ENCODE measurements at regions of chr5 and their contacts with region 1.

Region 1: GRCh38 chr5:1641560-1642166 is 117.9 kb upstream of the LPCAT1 start:
- DNase-seq: peak; percentile 21
- ATAC-seq: peak; percentile 90
- H3K4me3 ChIP-seq: no peak overlapping the region
- H3K27ac ChIP-seq: no peak overlapping the region
- H3K4me1 ChIP-seq: no peaks in the 10 kb centered on the region
- H3K27me3 ChIP-seq: peaks cover 2 to 9% of the 10 kb centered on the region in 2 experiments; a peak in 2 of 4 replicates
- CTCF ChIP-seq: peak; percentile 90 to 99 (median 98); a peak in 5 of 6 replicates
- EP300 ChIP-seq: no peak
- POLR2A ChIP-seq: no peak
- RAD21 ChIP-seq: peak; percentile 91

Region 2: GRCh38 chr5:923281-923873 is 718.3 kb before region 1 on chr5:
- CTCF ChIA-PET with region 1: interaction called, 7 read pairs
- POLR2A ChIA-PET with region 1: no interaction called
- RAD21 ChIA-PET with region 1: no interaction called
- SMC1A ChIA-PET with region 1: interaction called, 4 read pairs
- in situ Hi-C with region 1: loop called (anchors 10 kb)
- intact Hi-C with region 1: loop called (anchors 2 kb)
- DNase-seq: no peak
- ATAC-seq: peak; percentile 100
- H3K4me3 ChIP-seq: no peak overlapping the region
- H3K27ac ChIP-seq: no peak overlapping the region
- H3K4me1 ChIP-seq: no peaks in the 10 kb centered on the region
- H3K27me3 ChIP-seq: no peaks in the 10 kb centered on the region
- CTCF ChIP-seq: peak; percentile 81 to 97 (median 92); a peak in 5 of 6 replicates
- EP300 ChIP-seq: no peak
- POLR2A ChIP-seq: no peak
- RAD21 ChIP-seq: peak; percentile 93

Region 3: GRCh38 chr5:1208743-1209506 is 432.7 kb before region 1 on chr5:
- CTCF ChIA-PET with region 1: interaction called, 11 read pairs
- POLR2A ChIA-PET with region 1: no interaction called
- RAD21 ChIA-PET with region 1: interaction called, 9 read pairs
- SMC1A ChIA-PET with region 1: interaction called, 3 read pairs
- in situ Hi-C with region 1: no loop called
- intact Hi-C with region 1: no loop called
- DNase-seq: no peak
- ATAC-seq: peak; percentile 79
- H3K4me3 ChIP-seq: no peak overlapping the region
- H3K27ac ChIP-seq: no peak overlapping the region
- H3K4me1 ChIP-seq: no peaks in the 10 kb centered on the region
- H3K27me3 ChIP-seq: no peaks in the 10 kb centered on the region
- CTCF ChIP-seq: peak; percentile 13 to 50 (median 45); a peak in 3 of 6 replicates
- EP300 ChIP-seq: no peak
- POLR2A ChIP-seq: no peak
- RAD21 ChIP-seq: peak; percentile 55

Region 4: DNA sequence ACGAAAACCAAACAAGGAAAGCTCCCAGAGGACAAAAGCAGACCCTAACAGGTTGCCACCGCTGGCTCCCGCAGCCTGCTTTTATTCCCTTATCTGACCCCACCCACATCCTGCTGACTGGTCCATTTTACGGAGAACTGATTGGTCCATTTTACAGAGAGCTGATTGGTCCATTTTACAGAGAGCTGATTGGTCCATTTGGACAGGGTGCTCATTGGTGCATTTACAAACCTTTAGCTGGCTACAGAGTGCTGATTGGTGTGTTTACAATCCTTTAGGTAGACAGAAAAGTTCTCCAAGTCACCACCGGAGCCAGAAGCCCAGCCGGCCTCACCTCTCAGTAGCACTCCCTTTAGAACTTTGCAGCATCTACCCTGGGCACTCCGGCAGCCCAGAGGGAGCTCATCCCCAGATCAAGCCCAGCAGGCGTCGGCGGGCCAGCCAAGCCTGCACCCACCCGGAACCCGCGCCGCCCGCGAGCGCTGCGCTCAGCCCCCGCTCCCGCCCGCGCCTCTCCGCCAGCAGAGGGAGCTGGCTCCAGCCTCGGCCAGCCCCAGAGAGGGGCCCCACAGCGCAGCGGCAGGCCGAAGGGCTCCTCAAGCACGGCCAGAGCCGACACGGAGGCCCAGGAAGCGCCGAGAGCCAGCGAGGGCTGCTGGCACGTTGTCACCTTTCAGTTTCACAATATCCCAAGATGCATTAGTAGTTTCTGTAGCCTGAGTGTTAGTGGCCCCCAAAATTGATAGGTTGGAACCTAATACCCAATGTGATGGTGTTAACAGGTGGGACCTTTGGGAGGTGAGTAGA is 261.4 kb before region 1 on chr5:
- CTCF ChIA-PET with region 1: interaction called, 6 read pairs
- POLR2A ChIA-PET with region 1: no interaction called
- RAD21 ChIA-PET with region 1: no interaction called
- SMC1A ChIA-PET with region 1: interaction called, 3 read pairs
- in situ Hi-C with region 1: no loop called
- intact Hi-C with region 1: loop called (anchors 1 kb)
- DNase-seq: no peak
- ATAC-seq: peak; percentile 96
- H3K4me3 ChIP-seq: no peak overlapping the region
- H3K27ac ChIP-seq: no peak overlapping the region
- H3K4me1 ChIP-seq: no peaks in the 10 kb centered on the region
- H3K27me3 ChIP-seq: peaks cover 1 to 2% of the 10 kb centered on the region in 2 experiments; a peak in 2 of 4 replicates
- CTCF ChIP-seq: peak; percentile 43 to 64 (median 63); a peak in 5 of 6 replicates
- EP300 ChIP-seq: no peak
- POLR2A ChIP-seq: no peak
- RAD21 ChIP-seq: peak; percentile 57

Region 5: DNA sequence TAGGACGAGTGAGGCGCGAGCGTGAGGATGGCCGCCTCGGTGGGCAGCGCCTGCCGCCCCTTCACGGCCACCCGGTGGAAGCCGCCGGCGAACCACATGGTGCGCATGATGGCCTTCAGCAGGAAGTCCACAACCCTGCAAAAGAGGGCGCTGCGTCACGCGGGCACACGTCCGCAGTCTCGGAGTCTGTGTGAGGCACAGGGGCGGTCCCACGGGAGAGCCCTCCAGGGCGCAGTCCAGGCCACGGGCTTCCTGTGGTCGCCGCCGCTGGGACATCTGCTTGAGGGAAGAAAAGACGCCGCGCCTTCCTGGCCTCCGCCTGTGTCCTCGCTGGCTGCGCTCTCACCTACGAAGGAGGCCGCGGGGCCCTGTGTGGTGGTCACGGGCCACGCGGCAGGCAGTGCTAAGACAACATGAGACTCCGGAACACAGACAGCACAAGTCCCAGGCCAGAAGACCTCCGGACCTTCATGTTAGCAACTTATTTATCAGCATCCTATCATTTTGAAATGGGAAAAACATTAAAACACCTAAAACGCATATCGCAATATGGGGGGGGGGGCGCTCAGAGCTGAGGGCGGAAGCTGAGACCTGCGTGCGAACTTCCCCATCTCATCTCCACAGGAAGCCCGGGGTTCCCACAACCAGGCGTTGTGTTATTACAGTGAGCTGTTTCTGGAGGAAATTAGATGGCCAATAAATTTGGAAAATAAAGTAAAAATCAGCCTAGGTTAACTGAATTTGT is 146.7 kb before region 1 on chr5:
- CTCF ChIA-PET with region 1: interaction called, 5 read pairs
- POLR2A ChIA-PET with region 1: no interaction called
- RAD21 ChIA-PET with region 1: interaction called, 4 read pairs
- SMC1A ChIA-PET with region 1: no interaction called
- in situ Hi-C with region 1: no loop called
- intact Hi-C with region 1: loop called (anchors 5 kb)
- DNase-seq: peak; percentile 74
- ATAC-seq: peak; percentile 53
- H3K4me3 ChIP-seq: peak overlapping the region; percentile 59; the same call in 1 of the 2 replicates
- H3K27ac ChIP-seq: peak overlapping the region; percentile 87
- H3K4me1 ChIP-seq: peaks cover 87% of the 10 kb centered on the region
- H3K27me3 ChIP-seq: no peaks in the 10 kb centered on the region
- CTCF ChIP-seq: peak; percentile 14 to 67 (median 24); a peak in 3 of 6 replicates
- EP300 ChIP-seq: peak; percentile 71 to 84
- POLR2A ChIP-seq: no peak
- RAD21 ChIP-seq: 0 out of 2 replicates have a peak, but pooled peaks have one; percentile 25

Region 6: DNA sequence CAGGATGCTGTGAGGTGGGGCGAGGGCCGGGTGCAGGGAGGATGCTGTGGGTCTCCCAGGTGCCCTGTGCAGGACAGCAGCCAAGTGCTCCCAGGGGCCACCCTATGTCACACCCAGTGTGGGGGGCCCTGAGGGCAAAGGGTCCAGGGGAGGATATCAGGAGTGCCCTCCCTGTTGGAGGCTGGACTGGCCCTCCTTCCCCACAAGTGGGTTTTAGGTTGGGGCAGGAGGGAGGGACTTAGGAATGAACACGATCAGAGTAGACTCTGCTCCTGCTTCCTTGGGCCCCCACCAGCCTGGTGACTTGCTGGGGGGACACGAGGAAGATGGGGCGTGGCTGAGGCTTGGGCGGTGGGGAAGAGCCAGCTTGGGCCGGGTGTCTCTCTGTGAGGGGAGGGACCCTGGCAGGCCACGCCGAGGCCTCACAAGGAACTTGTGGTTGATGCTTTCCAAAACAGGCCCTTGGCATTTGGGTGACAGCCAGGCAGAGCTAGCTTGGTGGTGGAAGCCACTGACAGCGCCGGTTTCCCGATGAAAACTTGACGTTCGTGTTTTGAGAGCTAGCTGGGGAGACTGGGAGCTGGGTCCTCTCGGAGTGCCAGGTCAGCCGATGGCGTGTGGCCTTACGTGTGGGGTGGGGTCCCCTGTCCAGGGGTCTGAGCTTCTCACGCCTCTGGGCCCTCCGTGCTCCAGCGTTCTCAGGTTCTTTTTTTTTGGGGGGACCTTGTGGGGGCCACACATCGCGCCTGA is 11.1 kb after region 1 on chr5:
- CTCF ChIA-PET with region 1: interaction called, 12 read pairs
- POLR2A ChIA-PET with region 1: no interaction called
- RAD21 ChIA-PET with region 1: interaction called, 6 read pairs
- SMC1A ChIA-PET with region 1: no interaction called
- in situ Hi-C with region 1: no loop called
- intact Hi-C with region 1: no loop called
- DNase-seq: no peak
- ATAC-seq: no peak
- H3K4me3 ChIP-seq: no peak overlapping the region
- H3K27ac ChIP-seq: no peak overlapping the region
- H3K4me1 ChIP-seq: peaks cover 8% of the 10 kb centered on the region; the same call in 1 of the 2 replicates
- H3K27me3 ChIP-seq: peaks cover 5 to 8% of the 10 kb centered on the region in 2 experiments; a peak in 3 of 4 replicates
- CTCF ChIP-seq: no peak
- EP300 ChIP-seq: no peak
- POLR2A ChIP-seq: no peak
- RAD21 ChIP-seq: no peak

Measured in GM12878 (cell line).